ENCODE measurements at regions of chr10 and their contacts with region 1.

Region 1: DNA sequence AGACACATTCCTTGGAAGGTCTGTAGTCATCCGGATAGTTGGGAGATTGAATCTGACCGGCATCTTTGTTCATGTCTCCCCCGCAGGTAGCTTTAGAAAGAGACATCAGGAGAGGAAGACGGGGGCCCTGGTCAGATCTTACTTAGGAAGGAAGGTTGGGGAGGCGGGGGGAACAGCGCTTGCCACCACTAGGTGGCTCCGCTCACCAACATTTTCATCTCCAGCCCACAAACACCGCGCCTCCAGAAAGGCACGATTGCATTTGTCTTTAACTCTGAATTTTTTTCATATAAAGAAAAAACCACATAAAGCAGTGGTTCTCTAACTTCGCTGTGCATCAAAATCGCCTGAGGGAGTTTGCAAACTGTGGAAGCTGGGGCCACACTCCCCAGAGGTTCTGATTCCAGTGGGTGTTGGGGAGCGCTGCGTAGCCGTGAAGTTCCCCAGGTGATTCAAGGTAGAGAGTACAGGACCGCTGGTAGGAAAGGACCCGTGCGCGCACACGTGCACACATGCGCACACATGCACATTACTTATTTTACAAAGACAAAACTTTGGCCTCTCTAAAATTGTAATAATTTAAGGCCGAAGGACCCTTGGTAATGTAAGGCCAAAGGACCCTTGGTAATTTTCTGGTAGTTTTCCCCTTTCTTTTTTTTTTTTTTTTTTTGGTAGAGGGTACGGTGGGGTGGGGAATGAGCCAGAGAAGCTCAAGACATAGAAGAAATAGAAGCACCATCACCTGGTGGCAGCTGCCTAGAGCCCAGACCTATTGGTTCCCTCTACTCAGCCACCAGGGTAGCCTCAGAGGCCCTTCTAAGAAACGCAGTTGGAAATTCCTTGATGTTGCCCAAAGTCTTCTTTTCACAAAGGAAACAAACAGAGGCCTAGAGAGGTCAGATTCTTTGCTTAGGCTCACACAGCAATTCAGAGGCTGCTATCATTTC is 37.4 kb upstream of the OPALIN start:
- DNase-seq: no peak
- H3K4me3 ChIP-seq: no peak overlapping the region
- CTCF ChIP-seq: peak; percentile 82

Region 2: DNA sequence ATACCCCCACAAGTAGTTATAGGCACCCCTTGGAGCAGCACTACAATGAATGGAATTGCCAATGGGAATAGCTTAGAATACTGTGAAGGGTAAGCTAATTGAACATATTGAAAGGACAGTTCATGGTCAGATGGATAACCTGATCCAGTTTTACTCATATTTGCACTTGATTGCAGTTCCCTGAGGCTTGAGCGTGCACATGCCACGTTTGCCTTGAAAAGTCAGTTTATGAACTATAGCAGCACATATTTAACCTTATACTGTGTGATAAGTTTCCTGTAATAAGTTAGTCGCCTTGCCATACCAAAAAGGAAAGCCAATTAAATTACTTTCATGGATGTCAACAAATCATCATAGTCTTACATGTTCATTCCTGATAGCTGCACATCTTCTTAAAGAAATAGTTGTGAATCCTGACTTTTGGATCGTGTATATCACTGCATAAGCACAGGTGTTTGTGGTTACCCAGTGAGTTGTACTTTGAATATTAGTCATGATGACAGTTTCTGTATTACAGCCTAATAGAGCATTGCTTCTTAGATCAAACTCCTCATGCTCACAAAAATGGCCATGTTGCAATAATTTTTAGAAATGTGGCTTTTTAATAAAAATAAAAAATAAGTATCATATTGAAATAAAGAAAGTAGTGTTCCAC is 70.4 kb before region 1 on chr10:
- CTCF ChIA-PET with region 1: no interaction called
- POLR2A ChIA-PET with region 1: no interaction called
- DNase-seq: no peak
- H3K4me3 ChIP-seq: no peak overlapping the region
- CTCF ChIP-seq: no peak

Region 3: GRCh38 chr10:96380817-96381216 is 15.4 kb before region 1 on chr10:
- CTCF ChIA-PET with region 1: interaction called, 37 read pairs
- POLR2A ChIA-PET with region 1: no interaction called
- DNase-seq: no peak
- H3K4me3 ChIP-seq: no peak overlapping the region
- CTCF ChIP-seq: no peak

Region 4: DNA sequence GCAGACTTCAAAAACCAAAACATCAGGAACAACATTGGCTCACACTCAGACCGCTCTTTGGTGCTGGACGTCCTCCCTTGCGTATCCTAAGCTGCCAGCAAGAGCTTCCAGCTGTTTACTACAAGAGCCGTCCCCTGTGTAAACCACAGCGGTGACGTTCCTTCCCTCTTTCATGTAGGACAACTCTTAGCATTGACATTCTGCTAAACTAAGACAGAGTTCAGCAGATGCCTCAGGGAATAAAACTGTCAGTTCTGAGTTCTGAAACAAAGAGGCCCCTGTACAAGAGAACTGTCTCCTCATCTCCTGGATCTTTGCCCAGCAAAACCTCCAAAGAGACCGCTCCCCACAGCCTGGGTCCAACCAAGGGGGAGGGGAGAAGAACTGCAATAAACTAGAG is 20.4 kb after region 1 on chr10:
- CTCF ChIA-PET with region 1: interaction called, 18 read pairs
- POLR2A ChIA-PET with region 1: no interaction called
- DNase-seq: no peak
- H3K4me3 ChIP-seq: no peak overlapping the region
- CTCF ChIP-seq: no peak

Region 5: DNA sequence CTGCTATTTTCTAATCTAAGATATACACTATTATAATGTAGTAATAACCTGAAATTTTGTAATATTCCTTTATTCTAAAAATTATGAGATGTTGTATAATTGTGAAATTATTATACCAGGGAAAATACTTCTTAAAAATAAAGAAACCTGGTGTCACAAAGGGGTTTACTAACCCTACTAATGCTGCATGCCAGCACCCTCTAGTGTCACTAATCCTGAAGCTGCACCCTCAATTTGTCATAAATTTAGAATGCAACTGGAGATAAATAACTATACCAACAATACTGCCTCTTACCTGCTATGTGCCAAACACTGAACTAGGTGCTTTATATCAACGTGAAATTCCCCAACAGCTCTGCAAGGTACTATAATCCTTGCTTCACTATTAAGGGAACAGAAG is 159.8 kb after region 1 on chr10:
- CTCF ChIA-PET with region 1: interaction called, 13 read pairs
- POLR2A ChIA-PET with region 1: no interaction called
- DNase-seq: no peak
- H3K4me3 ChIP-seq: no peak overlapping the region
- CTCF ChIP-seq: peak; percentile 16